ENCODE measurements at regions of chr12 and their contacts with region 1.

Region 1: DNA sequence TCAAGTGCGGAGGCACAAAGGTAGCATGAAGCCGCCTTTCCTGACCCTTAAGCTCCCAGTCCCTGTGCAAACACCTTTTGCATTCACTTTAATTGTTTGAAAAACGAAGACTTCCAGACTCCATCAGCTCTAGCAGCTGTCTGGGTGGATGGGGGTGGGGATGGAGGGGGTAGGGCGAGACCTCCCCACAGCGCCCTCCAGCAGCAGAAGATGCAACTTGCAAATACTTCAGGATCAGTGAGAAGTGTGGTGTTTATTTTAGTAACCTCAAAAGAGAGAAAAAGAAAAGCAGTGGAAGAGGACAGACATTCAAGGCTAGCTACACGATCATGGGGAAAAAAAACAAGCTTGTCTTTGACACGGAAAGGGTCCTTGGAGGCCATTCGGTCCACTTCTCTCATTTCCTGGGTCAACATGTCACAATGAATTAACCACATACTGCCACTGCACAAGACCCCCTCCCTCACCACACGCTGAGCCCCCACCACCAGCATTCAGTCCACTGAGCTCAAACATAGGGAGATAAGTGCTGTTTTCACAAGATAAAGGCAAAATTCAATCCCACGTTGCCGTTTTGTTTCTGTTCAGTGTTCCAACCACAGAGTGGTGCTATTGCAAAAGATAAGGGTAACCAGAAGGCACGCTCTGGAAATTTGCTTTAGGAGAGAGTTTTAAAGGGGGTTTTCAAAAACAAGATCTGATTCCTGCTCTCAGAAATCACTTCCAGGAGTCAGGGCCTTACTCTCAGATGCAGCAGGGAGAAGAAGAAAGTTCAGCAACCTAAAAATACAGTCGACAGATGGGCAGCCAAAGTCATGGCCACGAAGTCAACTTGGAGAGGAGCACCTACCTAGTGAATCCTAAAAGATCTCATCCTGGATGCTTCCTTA is 3.3 kb upstream of the NTF3 start:
- DNase-seq: peak in 1 of 2 donors; percentile 25
- ATAC-seq: peak in 3 of 8 donors; percentile 13 to 43 (median 38)
- H3K4me3 ChIP-seq: no peak overlapping the region
- H3K27ac ChIP-seq: no peak overlapping the region
- H3K4me1 ChIP-seq: peaks cover 8 to 41% (median 26%) of the 10 kb centered on the region in 9 donors
- H3K27me3 ChIP-seq: peaks cover 0 to 76% (median 59%) of the 10 kb centered on the region in 7 donors
- CTCF ChIP-seq: peak in 8 of 9 donors; percentile 33 to 69 (median 58)

Region 2: GRCh38 chr12:5022465-5023061 is 406.0 kb before region 1 on chr12:
- intact Hi-C with region 1: loop called in 1 of 10 experiments (anchors 10 kb)
- DNase-seq: peak; percentile 33 to 47
- ATAC-seq: peak in 7 of 8 donors; percentile 12 to 68 (median 56)
- H3K4me3 ChIP-seq: no peak overlapping the region
- H3K27ac ChIP-seq: no peak overlapping the region
- H3K4me1 ChIP-seq: peaks cover 0 to 28% (median 7%) of the 10 kb centered on the region in 9 donors
- H3K27me3 ChIP-seq: peaks cover 0 to 4% (median 0%) of the 10 kb centered on the region in 7 donors
- CTCF ChIP-seq: peak; percentile 89 to 98 (median 94)

Region 3: GRCh38 chr12:5506821-5507231 is 78.2 kb after region 1 on chr12:
- intact Hi-C with region 1: loop called in 1 of 10 experiments (anchors 5 kb)
- DNase-seq: peak; percentile 48 to 69
- ATAC-seq: peak; percentile 48 to 90 (median 80)
- H3K4me3 ChIP-seq: no peak overlapping the region
- H3K27ac ChIP-seq: peak overlapping the region in 1 of 10 donors; percentile 10
- H3K4me1 ChIP-seq: peaks cover 0 to 38% (median 16%) of the 10 kb centered on the region in 9 donors
- H3K27me3 ChIP-seq: peaks cover 0 to 25% (median 5%) of the 10 kb centered on the region in 7 donors
- CTCF ChIP-seq: no peak

Region 4: DNA sequence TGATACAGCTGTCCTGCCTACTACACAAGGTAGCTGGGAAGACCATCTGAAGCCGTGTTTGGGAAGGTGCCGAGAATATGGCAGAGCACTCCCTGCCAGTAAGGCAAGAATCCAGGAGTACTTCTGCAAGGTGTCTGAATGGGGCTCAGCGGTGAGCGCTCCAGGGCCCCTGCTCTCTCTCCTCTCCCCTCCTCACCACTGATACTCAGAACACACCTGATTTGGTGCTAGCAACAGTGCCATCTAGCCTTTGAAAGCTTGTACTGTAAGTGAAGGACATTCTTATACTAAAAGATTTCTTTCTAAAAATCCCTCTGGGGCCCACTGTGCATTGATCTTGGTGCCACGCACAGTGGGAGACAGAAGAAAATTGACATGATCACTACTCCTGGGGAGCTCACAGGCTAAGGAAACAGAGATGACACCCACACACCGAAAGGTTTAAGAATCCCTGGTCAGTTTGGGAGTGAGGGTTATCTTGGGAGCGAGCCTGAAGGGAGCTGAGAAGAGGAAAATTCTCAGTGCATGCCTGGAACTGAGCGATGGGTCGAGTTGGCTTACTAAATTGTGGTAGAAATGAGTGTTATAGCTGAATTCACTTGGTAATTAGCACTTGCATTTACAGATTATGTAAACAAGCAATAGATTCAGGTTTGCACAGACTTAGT is 220.2 kb after region 1 on chr12:
- intact Hi-C with region 1: loop called in 5 of 10 experiments (anchors 1 to 10 kb)
- DNase-seq: peak in 1 of 2 donors; percentile 16
- ATAC-seq: peak in 7 of 8 donors; percentile 43 to 74 (median 71)
- H3K4me3 ChIP-seq: no peak overlapping the region
- H3K27ac ChIP-seq: no peak overlapping the region
- H3K4me1 ChIP-seq: peaks cover 0 to 12% (median 6%) of the 10 kb centered on the region in 9 donors
- H3K27me3 ChIP-seq: peaks cover 0 to 16% (median 0%) of the 10 kb centered on the region in 7 donors
- CTCF ChIP-seq: peak; percentile 25 to 68 (median 54)

Region 5: DNA sequence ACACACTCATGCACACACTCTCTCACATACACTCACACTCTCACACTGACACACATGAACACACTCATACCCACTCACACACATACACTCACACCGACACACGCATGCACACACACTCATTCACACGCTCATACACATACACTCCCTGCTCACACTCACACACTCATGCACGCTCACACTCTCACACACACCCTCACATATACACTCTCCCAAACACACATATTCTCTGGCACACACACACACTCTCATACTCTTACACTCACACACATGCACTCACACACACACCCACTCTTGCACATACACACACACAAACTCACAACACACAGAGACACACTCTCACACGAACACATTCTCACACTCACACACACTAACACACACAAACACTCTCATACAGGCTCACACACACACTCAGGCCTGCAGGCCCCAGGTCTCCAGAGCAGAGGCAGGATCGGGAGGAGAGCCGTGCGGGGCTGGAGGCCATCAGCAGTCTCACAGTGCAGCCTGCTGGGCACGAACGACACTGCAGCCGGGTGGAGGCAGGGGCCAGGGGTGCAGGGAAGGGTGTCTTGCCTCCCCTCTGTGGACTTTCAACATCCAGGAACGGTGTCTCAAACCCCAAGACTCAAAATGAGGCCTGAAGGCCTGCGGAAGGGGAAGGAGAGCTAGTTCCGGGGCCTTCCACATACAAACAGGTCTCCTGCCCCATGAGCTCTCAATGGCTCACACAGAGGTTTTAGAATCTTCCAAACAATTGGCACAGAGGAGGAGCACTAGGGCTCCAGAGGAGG is 367.8 kb after region 1 on chr12:
- intact Hi-C with region 1: loop called in 8 of 10 experiments (anchors 2 to 10 kb)
- DNase-seq: peak in 1 of 2 donors; percentile 43
- ATAC-seq: peak; percentile 38 to 75 (median 66)
- H3K4me3 ChIP-seq: no peak overlapping the region
- H3K27ac ChIP-seq: no peak overlapping the region
- H3K4me1 ChIP-seq: peaks cover 0 to 4% (median 0%) of the 10 kb centered on the region in 9 donors
- H3K27me3 ChIP-seq: no peaks in the 10 kb centered on the region
- CTCF ChIP-seq: peak in 8 of 9 donors; percentile 52 to 69 (median 62)